GM18951 (cell line): ENCODE measurements at regions of chr18 and their contacts with region 1.

Region 1: DNA sequence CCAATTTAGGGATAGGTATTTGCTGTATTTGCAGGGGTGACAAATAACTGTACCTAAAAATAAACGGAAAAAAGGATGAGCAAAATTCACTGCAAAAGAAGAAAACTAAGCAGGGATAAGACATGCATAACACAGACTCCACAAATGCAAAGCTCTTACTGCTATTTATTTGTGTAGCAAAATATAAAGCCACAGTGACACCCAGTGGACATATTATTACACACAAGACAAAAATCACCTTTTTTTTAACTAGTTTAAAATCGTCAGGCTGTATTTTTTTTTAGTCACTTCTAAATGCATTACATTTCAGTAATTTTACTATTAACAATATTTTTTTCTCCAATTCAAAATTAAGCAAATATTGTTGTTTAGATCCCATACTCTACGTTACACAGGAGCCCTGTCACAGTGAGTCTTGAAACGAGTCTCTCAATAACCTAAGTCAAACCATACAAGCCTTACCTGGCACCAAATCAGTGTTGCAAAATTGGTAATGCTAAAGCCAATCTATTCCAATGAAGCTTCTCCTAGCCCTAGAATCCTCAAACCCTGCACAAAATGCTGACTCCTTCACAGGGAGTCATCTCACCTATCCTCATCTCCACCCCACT is 23.7 kb downstream of the METTL4 start:
- POLR2A ChIP-seq: no peak

Region 2: GRCh38 chr18:1585879-1586488 is 961.6 kb before region 1 on chr18:
- in situ Hi-C with region 1: loop called (anchors 25 kb)
- POLR2A ChIP-seq: no peak

Region 3: GRCh38 chr18:1976484-1976883 is 571.1 kb before region 1 on chr18:
- in situ Hi-C with region 1: no loop called
- POLR2A ChIP-seq: no peak

Region 4: DNA sequence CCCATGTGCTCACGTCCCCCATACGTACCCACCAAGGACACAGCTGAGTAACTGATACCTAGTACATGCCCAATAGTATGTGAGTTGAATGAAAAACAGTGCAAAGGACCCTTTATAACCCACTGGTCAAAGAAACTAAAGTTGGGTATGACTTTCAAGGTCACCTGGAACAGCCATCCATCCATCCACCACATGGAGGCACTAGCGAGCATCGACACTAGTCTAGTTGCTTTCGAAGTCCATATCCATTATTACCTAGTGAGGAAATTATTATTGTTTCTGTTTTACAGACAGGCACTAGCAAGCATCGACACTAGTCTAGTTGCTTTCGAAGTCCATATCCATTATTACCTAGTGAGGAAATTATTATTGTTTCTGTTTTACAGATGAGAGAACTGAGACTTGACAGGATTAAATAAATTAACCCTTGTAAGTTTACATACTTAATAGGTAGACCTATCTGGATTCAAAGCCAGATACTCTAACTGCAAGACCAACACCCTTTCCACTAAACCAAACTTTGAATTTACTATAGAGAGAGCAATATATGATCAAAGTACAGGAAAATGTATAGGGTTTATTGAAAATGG is 209.9 kb before region 1 on chr18:
- in situ Hi-C with region 1: loop called (anchors 25 kb)
- POLR2A ChIP-seq: no peak

Region 5: DNA sequence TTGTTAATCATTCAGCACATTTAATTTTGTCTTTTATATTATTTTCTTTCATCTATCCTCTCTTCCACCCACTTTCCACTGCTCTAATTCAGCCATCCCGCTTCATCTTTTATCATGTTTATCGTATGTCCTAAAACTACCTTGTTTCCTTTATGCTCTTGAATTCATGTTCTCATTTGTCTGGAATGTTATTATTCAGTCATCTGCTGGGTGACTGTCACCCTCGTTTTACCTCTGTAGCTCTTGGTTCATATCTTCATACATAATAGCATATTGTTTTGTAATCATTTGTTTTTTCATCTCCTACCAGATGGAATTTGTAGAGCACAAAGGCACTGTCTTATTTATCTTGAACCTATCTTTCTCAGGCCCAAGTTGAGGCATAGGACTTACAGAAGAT is 144.9 kb after region 1 on chr18:
- in situ Hi-C with region 1: no loop called
- POLR2A ChIP-seq: no peak